ENCODE measurements at regions of chr1 and their contacts with region 1.

Region 1: DNA sequence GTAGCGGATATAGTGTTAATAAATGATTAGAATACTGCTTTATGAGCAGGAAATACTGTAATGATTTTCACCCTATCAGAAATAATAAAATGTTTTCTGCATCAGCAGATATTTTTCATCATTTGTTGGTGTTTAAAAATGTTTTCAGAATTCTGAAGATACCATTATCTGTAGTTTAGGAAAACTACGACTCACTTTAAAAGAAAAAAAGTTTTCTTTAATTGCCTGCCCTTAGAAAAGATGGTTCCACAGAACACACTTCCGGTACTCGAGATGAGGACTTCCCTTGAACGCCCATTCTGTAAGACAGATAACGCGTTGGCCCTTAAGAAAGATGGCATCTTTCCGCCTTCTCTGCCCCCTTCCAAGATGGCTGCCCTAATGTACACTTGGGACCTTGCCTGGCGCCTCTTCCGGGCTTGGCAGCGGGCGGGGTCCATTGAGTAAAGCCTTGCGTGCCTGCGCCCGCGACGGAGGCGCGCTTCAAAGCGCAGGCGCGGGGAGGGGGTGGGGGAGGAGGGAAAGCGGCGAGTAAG is at the start of gene SZRD1:
- DNase-seq: peak; percentile 100
- H3K4me3 ChIP-seq: peak within 1 kb of the TSS; percentile 79 to 94 (median 88)
- H3K27ac ChIP-seq: peak within 1 kb of the TSS; percentile 85
- H3K4me1 ChIP-seq: peaks cover 21% of the 10 kb centered on the region
- H3K27me3 ChIP-seq: no peaks in the 10 kb centered on the region
- CTCF ChIP-seq: no peak
- POLR2A ChIP-seq: no peak
- total RNA-seq, gene SZRD1: 164 and 168 TPM in 2 replicates

Region 2: DNA sequence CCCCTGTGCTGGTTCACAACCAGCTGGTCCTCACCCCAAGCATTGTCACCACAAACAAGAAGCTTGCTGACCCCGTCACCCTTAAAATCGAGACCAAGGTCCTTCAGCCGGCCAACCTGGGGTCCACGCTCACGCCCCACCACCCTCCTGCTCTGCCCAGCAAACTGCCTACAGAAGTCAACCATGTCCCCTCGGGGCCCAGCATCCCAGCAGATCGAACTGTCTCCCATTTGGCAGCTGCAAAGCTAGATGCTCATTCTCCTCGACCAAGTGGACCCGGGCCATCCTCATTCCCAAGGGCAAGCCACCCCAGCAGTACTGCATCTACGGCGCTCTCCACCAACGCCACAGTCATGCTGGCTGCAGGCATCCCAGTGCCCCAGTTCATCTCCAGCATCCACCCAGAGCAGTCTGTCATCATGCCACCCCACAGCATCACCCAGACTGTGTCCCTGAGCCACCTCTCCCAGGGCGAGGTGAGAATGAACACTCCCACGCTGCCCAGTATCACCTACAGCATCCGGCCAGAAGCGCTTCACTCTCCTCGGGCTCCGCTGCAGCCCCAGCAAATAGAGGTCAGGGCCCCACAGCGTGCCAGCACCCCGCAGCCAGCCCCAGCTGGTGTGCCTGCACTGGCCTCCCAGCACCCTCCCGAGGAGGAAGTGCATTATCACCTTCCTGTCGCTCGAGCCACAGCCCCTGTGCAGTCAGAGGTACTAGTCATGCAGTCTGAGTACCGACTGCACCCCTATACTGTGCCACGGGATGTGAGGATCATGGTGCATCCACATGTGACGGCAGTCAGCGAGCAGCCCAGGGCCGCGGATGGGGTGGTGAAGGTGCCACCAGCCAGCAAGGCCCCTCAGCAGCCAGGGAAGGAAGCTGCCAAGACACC is 431.5 kb before region 1 on chr1:
- CTCF ChIA-PET with region 1: no interaction called
- POLR2A ChIA-PET with region 1: no interaction called
- dilution Hi-C with region 1: no loop called
- intact Hi-C with region 1: no loop called
- DNase-seq: no peak
- H3K4me3 ChIP-seq: no peak overlapping the region
- H3K27ac ChIP-seq: no peak overlapping the region
- H3K4me1 ChIP-seq: peaks cover 26% of the 10 kb centered on the region
- H3K27me3 ChIP-seq: no peaks in the 10 kb centered on the region
- CTCF ChIP-seq: no peak
- POLR2A ChIP-seq: no peak

Region 3: GRCh38 chr1:16073490-16074119 is 293.2 kb before region 1 on chr1 and contains the start of gene FAM131C:
- CTCF ChIA-PET with region 1: interaction called, 92 read pairs
- POLR2A ChIA-PET with region 1: interaction called, 3 read pairs
- dilution Hi-C with region 1: no loop called
- intact Hi-C with region 1: no loop called
- DNase-seq: no peak
- H3K4me3 ChIP-seq: peak within 1 kb of the TSS; percentile 23 to 37 (median 25)
- H3K27ac ChIP-seq: no peak within 1 kb of the TSS
- H3K4me1 ChIP-seq: peaks cover 13% of the 10 kb centered on the region
- H3K27me3 ChIP-seq: no peaks in the 10 kb centered on the region
- CTCF ChIP-seq: peak; percentile 8 to 51
- POLR2A ChIP-seq: no peak
- total RNA-seq, gene FAM131C: 0.44 TPM in 1 of 2 replicates, not detected in the other

Region 4: GRCh38 chr1:16187748-16188401 is 178.9 kb before region 1 on chr1:
- CTCF ChIA-PET with region 1: interaction called, 18 read pairs
- POLR2A ChIA-PET with region 1: no interaction called
- dilution Hi-C with region 1: no loop called
- intact Hi-C with region 1: loop called (anchors 2 kb)
- DNase-seq: peak; percentile 85
- H3K4me3 ChIP-seq: no peak overlapping the region
- H3K27ac ChIP-seq: no peak overlapping the region
- H3K4me1 ChIP-seq: peaks cover 5% of the 10 kb centered on the region
- H3K27me3 ChIP-seq: no peaks in the 10 kb centered on the region
- CTCF ChIP-seq: peak; percentile 93 to 95
- POLR2A ChIP-seq: no peak

Region 5: DNA sequence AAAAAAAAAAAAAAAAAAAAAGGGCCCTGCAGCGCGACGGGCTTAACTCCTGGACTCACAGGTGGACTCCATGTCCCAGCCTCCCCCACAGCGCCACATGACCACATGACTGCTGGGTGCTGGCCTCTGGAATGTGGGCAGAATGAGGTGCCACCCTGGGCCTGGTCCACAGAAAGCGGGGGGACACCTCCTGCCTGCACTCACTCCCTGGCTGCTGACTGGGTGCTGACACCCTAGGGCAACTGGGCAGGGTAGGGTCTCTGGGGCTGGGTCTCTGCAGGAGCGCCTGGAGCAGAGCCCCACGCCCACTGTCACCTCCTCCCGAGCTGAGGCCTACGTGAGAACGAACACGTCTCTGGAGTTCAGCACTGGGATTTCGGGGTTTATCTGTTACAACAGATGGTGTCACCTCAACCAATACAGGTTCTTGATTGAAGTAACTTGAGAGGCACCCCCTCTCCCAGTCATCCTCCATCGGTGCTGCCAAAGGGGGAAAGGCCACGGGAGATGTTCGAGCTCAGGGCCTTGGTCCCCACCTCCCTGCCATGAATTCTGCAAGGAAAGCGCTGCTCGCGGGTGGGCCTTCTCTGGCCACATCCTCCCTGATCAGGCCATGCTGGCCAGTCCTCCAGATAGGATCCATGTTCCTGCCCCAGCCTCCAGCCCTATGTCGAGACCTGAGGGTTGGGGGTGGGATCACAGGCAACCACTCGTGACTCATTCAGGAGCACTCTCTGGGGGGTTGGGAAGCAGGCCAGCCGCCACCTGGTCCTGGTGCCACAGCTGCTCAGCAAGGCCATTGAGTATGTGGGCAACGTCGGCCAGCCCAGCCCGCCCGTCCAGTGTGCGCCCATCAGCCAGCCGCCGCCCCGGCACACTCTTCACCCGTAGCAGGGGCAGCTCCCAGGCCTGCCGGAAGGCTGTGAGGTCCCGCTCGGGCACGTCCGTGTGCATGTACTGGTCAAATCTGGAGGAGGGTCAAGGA is 135.2 kb before region 1 on chr1:
- CTCF ChIA-PET with region 1: interaction called, 10 read pairs
- POLR2A ChIA-PET with region 1: interaction called, 12 read pairs
- dilution Hi-C with region 1: no loop called
- intact Hi-C with region 1: no loop called
- DNase-seq: no peak
- H3K4me3 ChIP-seq: no peak overlapping the region
- H3K27ac ChIP-seq: no peak overlapping the region
- H3K4me1 ChIP-seq: peaks cover 4% of the 10 kb centered on the region
- H3K27me3 ChIP-seq: peaks cover 14 to 17% of the 10 kb centered on the region in 2 experiments
- CTCF ChIP-seq: no peak
- POLR2A ChIP-seq: no peak

Region 6: DNA sequence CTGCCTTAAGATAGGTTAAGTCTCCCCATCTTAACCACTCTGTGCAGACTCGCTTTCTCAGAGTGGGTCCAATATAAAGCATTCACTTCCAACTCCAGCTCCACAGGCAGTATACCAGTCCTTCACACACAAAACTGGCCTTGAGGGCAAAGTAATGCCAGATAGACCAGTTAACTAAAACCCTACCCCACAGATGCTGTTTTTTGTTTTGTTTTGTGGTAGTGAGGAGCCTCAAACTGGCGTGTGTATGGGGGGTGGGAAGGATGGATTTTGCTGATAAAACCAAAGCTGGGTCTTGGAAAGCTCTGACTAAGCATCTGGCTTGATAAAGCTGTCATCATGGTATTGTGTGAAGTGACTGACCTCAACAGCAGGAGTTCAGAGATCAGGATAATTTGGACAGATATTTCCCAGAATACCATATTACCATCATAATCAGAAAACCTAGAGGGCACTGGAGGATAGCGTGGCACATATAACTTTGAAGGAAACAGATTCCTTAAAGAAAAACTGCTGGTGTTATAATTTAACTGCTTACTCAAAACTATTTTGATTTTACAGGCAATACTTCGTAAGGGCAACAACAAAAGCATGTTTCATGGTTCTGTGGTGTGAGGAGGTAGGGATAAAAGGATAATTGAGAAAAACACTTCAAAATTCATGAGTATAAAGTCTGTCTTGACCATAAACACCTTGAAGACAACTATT is 100.2 kb before region 1 on chr1:
- CTCF ChIA-PET with region 1: interaction called, 11 read pairs
- POLR2A ChIA-PET with region 1: no interaction called
- dilution Hi-C with region 1: no loop called
- intact Hi-C with region 1: no loop called
- DNase-seq: peak; percentile 96
- H3K4me3 ChIP-seq: no peak overlapping the region
- H3K27ac ChIP-seq: peak overlapping the region; percentile 30
- H3K4me1 ChIP-seq: peaks cover 27% of the 10 kb centered on the region
- H3K27me3 ChIP-seq: no peaks in the 10 kb centered on the region
- CTCF ChIP-seq: no peak
- POLR2A ChIP-seq: no peak

Region 7: DNA sequence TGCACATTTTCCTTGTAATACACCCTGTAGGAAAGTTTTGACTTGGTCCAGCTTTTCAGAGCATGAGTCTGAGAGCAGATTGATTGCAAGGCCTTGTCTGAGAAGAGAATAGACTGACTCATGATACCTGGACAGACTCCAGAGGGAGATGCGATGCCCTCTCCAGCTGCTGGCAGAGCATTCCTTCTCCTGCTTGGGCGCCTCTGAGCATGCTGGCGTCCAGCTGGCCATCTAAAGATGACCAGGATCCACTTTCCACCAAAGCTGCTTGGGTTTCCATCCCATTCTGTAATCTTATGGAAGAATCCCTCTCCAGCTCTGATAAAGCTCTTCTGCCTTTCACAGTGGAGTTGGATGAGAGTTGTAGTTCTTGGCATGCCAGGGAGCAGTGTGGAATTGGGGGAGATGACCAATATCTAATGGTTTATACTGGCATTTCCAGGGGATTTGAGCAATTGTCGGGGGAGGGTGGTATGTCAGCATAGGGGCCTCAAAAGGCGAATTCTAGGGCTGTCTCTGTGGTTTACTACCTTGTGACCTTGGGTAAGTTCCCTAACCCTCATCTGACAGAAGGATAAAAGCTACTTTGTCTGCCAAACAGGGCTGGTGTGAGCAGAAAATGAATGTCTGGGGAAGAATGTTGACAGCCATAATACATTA is 19.8 kb after region 1 on chr1:
- CTCF ChIA-PET with region 1: interaction called, 12 read pairs
- POLR2A ChIA-PET with region 1: interaction called, 4 read pairs
- dilution Hi-C with region 1: no loop called
- intact Hi-C with region 1: no loop called
- DNase-seq: peak; percentile 71
- H3K4me3 ChIP-seq: no peak overlapping the region
- H3K27ac ChIP-seq: no peak overlapping the region
- H3K4me1 ChIP-seq: peaks cover 21% of the 10 kb centered on the region
- H3K27me3 ChIP-seq: no peaks in the 10 kb centered on the region
- CTCF ChIP-seq: no peak
- POLR2A ChIP-seq: no peak

Region 8: GRCh38 chr1:16474166-16474800 is 107.5 kb after region 1 on chr1:
- CTCF ChIA-PET with region 1: no interaction called
- POLR2A ChIA-PET with region 1: no interaction called
- dilution Hi-C with region 1: no loop called
- intact Hi-C with region 1: no loop called
- DNase-seq: no peak
- H3K4me3 ChIP-seq: no peak overlapping the region
- H3K27ac ChIP-seq: no peak overlapping the region
- H3K4me1 ChIP-seq: no peaks in the 10 kb centered on the region
- H3K27me3 ChIP-seq: no peaks in the 10 kb centered on the region
- CTCF ChIP-seq: no peak
- POLR2A ChIP-seq: no peak